ENCODE measurements at regions of chr22 and their contacts with region 1.

Region 1: DNA sequence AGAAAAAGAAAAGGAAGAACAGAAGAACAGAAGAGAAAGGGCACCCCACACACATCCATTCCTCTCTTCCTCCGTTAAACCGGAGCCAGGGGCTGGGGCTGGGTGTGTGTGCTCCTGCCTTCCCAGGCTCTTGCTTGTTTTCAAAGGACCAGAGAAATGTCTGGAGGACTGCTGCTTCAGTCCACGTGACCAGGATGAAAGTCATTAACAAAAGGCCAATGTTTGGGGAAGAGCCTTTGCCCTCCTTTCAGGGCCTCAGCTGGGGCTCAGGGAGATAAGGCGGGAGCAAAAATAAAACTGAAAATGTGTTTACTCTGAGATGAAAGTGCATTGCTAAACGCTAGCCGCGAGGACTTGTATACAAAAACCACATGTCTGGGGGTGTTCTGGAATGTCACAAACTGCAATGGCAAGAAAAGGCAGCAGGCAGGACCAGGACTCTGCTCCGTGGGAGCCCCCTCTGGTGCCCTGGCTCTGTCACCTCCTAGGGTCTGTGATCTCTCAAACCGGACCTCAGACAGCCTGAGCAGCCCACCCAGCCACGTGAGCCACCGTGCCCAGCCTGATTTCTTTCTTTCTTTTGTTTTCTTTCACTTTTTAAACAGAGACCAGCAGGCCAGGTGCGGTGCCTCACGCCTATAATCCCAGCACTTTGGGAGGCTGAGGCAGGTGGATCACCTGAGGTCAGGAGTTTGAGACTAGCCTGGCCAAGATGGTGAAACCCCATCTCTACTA is 31.6 kb upstream of the MYH9 start:
- DNase-seq: peak; percentile 100
- ATAC-seq: peak; percentile 88
- H3K4me3 ChIP-seq: peak overlapping the region in 2 of 3 experiments; percentile 49 to 53; a peak in 5 of 6 replicates
- H3K27ac ChIP-seq: peak overlapping the region; percentile 88
- H3K4me1 ChIP-seq: peaks cover 83% of the 10 kb centered on the region
- H3K27me3 ChIP-seq: no peaks in the 10 kb centered on the region
- CTCF ChIP-seq: peak; percentile 34
- EP300 ChIP-seq: peak; percentile 44 to 99; a peak in 3 of 4 replicates
- POLR2A ChIP-seq: peak; percentile 48 to 57; a peak in 3 of 4 replicates
- RAD21 ChIP-seq: peak; percentile 49

Region 2: DNA sequence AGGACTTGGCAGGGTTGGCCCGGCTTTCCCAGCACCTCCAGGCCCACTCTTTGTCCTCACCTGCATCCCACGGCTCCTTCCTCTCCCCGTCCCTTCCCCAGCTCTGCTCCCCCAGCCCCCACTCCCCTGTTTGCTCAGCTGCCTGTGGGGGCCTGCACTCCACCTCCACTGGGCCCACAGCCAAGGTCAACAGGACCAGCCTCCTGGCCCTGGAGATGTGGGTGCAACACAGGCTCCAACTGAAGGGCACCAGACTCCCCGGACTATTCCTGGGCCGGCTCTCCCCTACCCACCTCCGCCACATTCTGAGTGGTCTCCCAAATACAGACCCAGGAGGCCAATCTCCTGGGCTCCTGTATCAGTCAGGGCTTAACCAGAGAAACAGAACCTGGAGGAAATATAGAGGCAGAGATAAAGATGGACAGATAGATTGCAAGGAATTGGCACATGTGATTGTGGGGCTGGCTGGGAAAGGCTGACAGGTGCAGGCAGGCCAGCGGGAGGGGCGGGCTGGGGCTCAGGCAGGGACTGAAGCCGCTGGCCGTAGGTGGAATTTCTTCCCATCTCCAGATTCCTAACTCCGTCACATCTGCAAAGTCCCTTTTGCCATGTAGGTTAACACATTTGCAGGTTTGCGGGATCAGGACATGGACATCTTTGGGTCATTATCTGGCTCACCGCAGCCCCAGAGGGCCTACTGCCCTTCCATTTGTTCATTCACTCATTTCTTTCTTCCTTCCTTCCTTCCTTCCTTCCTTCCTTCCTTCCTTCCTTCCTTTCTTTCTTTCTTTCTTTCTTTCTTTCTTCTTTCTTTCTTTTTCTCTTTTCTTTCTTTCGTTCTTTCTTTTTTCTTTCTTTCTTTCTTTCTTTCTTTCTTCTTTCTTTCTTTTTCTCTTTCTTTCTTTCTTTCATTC is 14.2 kb after region 1 on chr22:
- CTCF ChIA-PET with region 1: no interaction called
- POLR2A ChIA-PET with region 1: interaction called, 151 read pairs
- in situ Hi-C with region 1: no loop called
- intact Hi-C with region 1: loop called (anchors 1 kb)
- DNase-seq: peak; percentile 66
- ATAC-seq: peak; percentile 23
- H3K4me3 ChIP-seq: peak overlapping the region; percentile 11 to 66 (median 52); a peak in 5 of 6 replicates
- H3K27ac ChIP-seq: peak overlapping the region; percentile 89
- H3K4me1 ChIP-seq: peaks cover 74% of the 10 kb centered on the region
- H3K27me3 ChIP-seq: no peaks in the 10 kb centered on the region
- CTCF ChIP-seq: 0 out of 2 replicates have a peak, but pooled peaks have one; percentile 6
- EP300 ChIP-seq: peak in 1 of 2 experiments; percentile 93; a peak in 2 of 4 replicates
- POLR2A ChIP-seq: peak in 1 of 2 experiments; percentile 27; a peak in 1 of 4 replicates
- RAD21 ChIP-seq: no peak

Region 3: DNA sequence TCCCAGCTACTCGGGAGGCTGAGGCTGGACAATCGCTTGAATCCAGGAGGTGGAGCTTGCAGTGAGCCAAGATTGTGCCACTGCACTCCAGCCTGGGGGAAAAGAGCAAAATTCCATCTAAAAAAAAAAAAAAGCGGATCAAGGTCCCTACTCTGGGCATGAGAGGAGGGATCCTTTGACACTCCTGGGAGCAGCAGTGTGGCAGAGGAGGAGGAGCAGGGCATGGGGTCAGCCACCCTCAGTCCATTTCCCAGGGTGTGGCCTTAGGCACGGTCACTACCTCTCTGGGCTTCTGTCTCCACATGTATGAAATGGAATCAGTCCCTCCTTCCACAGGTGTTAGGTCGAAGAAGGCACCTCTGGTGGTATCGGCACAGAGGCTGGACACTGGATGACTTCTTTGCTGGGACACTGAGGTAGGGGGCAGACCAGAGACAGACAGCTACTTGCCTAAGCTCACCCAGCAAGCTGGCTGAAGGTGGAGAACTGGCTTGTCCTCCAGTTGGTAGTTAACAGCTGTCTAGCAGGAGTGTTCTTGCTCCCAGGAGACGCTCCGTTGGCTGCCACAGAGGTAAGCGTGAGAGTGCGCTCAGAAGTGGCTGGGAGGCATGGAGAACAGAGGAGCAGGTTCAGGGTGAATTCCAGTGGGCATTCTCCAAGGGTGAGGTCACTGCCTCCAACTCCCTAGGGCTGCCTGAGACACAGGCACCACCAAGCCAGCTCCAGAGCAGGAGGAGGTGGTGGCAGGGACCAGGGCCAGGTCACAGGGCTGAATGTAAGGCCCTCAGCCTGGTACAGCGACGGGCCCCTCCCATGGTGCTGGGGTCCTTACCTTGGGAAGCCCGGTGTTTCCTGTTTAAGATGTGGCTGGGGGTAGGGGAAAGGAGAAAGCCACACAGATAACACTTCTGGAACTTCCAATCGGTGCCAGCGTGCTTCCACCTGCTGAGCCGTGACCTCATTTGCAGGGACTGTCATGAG is 42.6 kb after region 1 on chr22:
- CTCF ChIA-PET with region 1: no interaction called
- POLR2A ChIA-PET with region 1: interaction called, 10 read pairs
- in situ Hi-C with region 1: no loop called
- intact Hi-C with region 1: no loop called
- DNase-seq: peak; percentile 63
- ATAC-seq: peak; percentile 74
- H3K4me3 ChIP-seq: peak overlapping the region in 1 of 3 experiments; percentile 46; a peak in 2 of 6 replicates
- H3K27ac ChIP-seq: no peak overlapping the region
- H3K4me1 ChIP-seq: peaks cover 54% of the 10 kb centered on the region
- H3K27me3 ChIP-seq: no peaks in the 10 kb centered on the region
- CTCF ChIP-seq: no peak
- EP300 ChIP-seq: no peak
- POLR2A ChIP-seq: 0 out of 4 replicates have a peak, but pooled peaks of 1 of the 2 experiments have one; percentile 23
- RAD21 ChIP-seq: no peak

Measured in HepG2 (cell line).